Activated B cell treated with CpG ODN at 0.5 μM for 24 hours (primary cell): ENCODE measurements at regions of chr18 and their contacts with region 1.

Region 1: GRCh38 chr18:79465392-79465991 is 69.8 kb downstream of the NFATC1 start:
- DNase-seq: peak; percentile 69
- ATAC-seq: peak; percentile 80
- H3K4me3 Mint-ChIP-seq: peak overlapping the region; percentile 92
- H3K27ac Mint-ChIP-seq: peak overlapping the region; percentile 97
- H3K4me1 Mint-ChIP-seq: peaks cover 77% of the 10 kb centered on the region
- H3K27me3 Mint-ChIP-seq: no peaks in the 10 kb centered on the region
- CTCF ChIP-seq: no peak

Region 2: GRCh38 chr18:79405781-79406575 is 59.5 kb before region 1 on chr18:
- CTCF ChIA-PET with region 1: no interaction called
- POLR2A ChIA-PET with region 1: interaction called, 10 read pairs
- intact Hi-C with region 1: loop called (anchors 1 kb)
- DNase-seq: peak; percentile 81
- ATAC-seq: peak; percentile 89
- H3K4me3 Mint-ChIP-seq: peak overlapping the region; percentile 80
- H3K27ac Mint-ChIP-seq: peak overlapping the region; percentile 98
- H3K4me1 Mint-ChIP-seq: peaks cover 65% of the 10 kb centered on the region
- H3K27me3 Mint-ChIP-seq: no peaks in the 10 kb centered on the region
- CTCF ChIP-seq: no peak

Region 3: DNA sequence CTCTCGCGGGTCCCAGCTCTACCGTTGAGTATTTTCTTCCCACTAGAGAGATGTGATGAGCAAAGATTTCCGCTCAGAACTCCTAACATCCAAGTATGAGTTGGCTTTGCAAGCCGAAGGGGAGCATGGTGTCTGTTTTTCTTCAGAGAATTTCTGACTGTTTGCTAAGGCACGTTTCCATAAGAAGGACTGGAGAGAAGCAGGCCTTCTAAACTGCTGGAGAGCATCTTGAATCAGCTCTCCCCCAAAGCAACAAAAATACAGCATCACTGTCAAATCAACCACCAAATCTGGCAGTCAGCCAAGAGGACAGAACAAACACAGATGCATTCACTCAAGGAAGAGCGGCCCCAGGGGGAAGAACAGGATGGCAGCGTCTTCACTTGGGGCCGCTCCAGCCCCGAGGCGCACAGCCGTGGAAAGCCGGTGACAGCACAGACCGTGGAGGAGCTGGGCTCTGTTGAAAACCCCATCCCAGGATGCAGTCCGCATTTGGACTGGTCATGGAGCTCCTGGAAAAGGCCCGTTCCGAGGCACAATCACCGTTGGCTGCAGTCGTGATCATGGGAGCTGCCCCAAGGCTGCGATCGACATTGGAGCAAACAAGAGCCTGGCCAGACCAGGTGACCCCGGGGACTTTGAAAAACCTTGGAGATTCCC is 31.6 kb after region 1 on chr18:
- CTCF ChIA-PET with region 1: no interaction called
- POLR2A ChIA-PET with region 1: interaction called, 27 read pairs
- intact Hi-C with region 1: loop called (anchors 1 kb)
- DNase-seq: no peak
- ATAC-seq: peak; percentile 79
- H3K4me3 Mint-ChIP-seq: peak overlapping the region; percentile 64
- H3K27ac Mint-ChIP-seq: peak overlapping the region; percentile 80
- H3K4me1 Mint-ChIP-seq: peaks cover 33% of the 10 kb centered on the region
- H3K27me3 Mint-ChIP-seq: no peaks in the 10 kb centered on the region
- CTCF ChIP-seq: no peak

Region 4: GRCh38 chr18:79625195-79625923 is 159.9 kb after region 1 on chr18:
- CTCF ChIA-PET with region 1: no interaction called
- POLR2A ChIA-PET with region 1: interaction called, 4 read pairs
- intact Hi-C with region 1: loop called (anchors 1 kb)
- DNase-seq: peak; percentile 42
- ATAC-seq: peak; percentile 85
- H3K4me3 Mint-ChIP-seq: peak overlapping the region; percentile 73
- H3K27ac Mint-ChIP-seq: peak overlapping the region; percentile 79
- H3K4me1 Mint-ChIP-seq: peaks cover 51% of the 10 kb centered on the region
- H3K27me3 Mint-ChIP-seq: no peaks in the 10 kb centered on the region
- CTCF ChIP-seq: no peak